ENCODE measurements at regions of chr12 and their contacts with region 1.

Region 1: DNA sequence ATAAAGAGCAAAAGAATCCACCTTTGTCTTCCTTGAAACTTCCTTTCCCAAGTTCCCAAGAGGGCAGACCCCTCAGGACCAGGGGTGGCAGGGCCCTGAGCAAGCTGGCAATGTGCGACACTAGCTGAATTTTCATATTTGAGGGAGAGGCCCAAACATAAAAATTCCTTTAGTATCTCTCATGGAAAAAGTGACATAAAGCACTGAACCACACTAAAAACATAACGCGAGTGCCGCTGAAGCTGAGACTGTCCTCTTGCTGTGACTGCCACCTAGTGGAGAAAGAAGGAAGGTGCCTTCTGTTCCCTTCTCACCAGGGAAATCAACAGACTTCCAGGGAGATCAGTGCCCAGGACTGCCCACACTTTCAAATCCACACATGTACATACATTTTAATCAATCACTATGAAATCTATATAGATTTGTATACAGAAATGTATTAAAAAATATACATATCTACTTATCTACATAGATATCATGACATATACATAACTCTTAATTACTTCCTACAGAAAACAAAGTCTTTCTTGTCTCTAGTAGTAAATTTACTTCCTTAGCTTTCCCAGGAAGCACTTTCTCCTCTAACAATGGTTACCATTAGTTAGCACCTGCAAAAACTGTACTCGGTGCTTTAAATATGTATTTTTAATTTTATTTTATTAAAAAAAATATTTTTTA is 53.8 kb downstream of the SSH1 start:
- DNase-seq: peak; percentile 88
- H3K4me3 Mint-ChIP-seq: no peak overlapping the region
- H3K27ac Mint-ChIP-seq: no peak overlapping the region
- H3K4me1 Mint-ChIP-seq: no peaks in the 10 kb centered on the region
- H3K27me3 Mint-ChIP-seq: no peaks in the 10 kb centered on the region
- CTCF ChIP-seq: peak; percentile 96

Region 2: DNA sequence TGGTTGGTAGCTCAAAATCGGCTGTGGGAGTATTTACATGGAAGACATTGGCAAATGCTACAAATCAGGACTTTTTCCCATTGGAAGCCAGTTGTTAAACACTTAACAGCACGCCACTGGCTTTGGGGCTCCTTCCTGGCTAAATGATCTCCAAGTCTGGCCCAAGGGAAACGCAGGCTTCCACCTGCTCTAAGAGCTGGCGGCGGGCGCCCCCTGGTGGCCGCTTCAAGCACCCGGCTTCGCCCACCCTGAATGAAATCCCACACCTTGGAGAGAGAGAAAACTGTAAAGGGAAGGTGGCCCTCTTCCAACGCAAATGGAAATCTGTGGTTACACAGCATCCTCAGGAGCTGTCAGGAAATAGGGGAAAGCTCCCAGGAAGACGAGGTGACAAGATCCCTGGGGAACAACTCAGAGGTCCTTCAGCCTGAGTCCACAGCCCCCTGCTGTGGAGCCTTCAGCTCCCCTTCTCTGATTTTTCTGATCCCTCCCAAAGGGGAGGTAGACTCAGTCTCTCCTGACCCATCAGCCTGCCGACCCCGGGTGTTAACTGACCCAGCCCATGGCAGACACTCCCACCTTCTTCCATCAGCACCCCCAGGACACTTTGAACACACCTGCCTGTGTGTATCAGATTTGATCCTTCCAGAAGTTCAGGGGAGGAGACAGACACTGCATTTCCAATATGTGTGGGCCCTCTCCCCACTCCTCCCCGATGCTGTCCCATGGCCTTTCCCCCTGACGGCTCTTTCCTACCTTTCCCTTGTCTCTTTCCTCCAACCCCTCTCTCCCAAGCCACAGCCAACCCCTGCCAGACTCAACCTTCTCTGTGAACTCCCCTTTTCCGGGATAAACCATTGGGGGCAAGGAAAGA is 185.3 kb before region 1 on chr12:
- CTCF ChIA-PET with region 1: interaction called, 31 read pairs
- POLR2A ChIA-PET with region 1: no interaction called
- intact Hi-C with region 1: no loop called
- DNase-seq: peak; percentile 85
- H3K4me3 Mint-ChIP-seq: no peak overlapping the region
- H3K27ac Mint-ChIP-seq: no peak overlapping the region
- H3K4me1 Mint-ChIP-seq: no peaks in the 10 kb centered on the region
- H3K27me3 Mint-ChIP-seq: no peaks in the 10 kb centered on the region
- CTCF ChIP-seq: peak; percentile 94

Region 3: DNA sequence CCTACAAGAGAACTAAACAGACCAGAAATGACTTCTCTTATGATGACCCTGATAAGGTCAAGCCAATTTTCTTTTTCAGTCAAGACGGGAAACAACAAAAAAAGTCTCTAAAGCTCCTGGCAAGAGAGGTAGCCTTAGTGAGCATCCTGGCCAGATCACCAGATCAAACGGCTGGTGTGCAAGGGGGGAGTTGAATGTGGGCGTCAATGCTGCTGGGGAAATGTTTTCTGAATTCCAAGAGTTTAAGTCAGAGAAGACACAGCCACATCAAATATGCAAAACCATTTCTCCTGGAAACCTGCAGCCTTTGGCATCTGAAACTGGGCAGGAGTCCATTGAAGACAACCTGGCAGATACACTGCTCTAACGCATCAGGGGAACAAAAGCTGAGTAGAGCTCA is 153.9 kb before region 1 on chr12:
- CTCF ChIA-PET with region 1: interaction called, 12 read pairs
- POLR2A ChIA-PET with region 1: no interaction called
- intact Hi-C with region 1: no loop called
- DNase-seq: peak; percentile 41
- H3K4me3 Mint-ChIP-seq: no peak overlapping the region
- H3K27ac Mint-ChIP-seq: no peak overlapping the region
- H3K4me1 Mint-ChIP-seq: no peaks in the 10 kb centered on the region
- H3K27me3 Mint-ChIP-seq: no peaks in the 10 kb centered on the region
- CTCF ChIP-seq: no peak

Region 4: DNA sequence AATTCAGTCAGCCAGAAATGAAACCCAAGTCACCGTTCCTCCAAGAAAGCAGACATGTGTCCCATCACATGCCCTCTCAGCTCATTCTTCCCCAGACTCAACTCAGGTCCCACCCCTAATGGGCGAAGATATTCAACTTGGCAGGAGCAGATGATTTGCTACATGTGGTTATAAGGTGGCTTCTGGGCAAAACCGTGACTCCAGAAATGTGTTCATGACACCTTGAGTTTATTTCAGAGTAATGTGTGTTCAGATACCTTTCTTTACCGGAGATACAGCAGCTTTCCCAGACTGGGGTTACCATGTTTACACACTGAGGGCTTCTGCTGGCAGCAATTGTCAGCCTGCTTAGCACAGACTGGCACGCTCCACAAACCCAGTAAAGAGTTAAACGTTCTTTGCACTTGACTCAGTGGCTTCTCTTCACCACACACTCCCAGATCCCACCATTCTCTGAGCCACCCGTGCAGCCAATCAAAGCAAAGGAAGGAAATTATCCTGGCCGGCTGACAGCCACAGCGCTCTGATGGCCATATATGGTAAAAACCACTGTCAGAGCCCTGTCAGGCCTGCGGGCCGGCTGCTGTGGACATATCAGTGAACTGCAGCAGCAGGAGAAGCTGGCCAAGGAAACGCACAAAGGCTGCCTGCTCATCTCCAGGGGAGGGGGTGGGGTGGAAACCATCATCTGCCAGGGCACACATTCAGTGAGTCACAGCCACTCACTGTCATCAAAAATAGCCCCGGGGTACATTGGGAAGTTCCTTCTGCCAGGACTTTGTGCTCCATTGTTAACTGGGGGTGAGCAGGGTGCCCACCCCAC is 112.2 kb before region 1 on chr12:
- CTCF ChIA-PET with region 1: interaction called, 19 read pairs
- POLR2A ChIA-PET with region 1: interaction called, 6 read pairs
- intact Hi-C with region 1: no loop called
- DNase-seq: peak; percentile 100
- H3K4me3 Mint-ChIP-seq: peak overlapping the region; percentile 71
- H3K27ac Mint-ChIP-seq: peak overlapping the region; percentile 98
- H3K4me1 Mint-ChIP-seq: peaks cover 46% of the 10 kb centered on the region
- H3K27me3 Mint-ChIP-seq: no peaks in the 10 kb centered on the region
- CTCF ChIP-seq: peak; percentile 22

Region 5: GRCh38 chr12:108784270-108784669 is 19.3 kb before region 1 on chr12:
- CTCF ChIA-PET with region 1: interaction called, 16 read pairs
- POLR2A ChIA-PET with region 1: interaction called, 4 read pairs
- intact Hi-C with region 1: no loop called
- DNase-seq: no peak
- H3K4me3 Mint-ChIP-seq: no peak overlapping the region
- H3K27ac Mint-ChIP-seq: no peak overlapping the region
- H3K4me1 Mint-ChIP-seq: no peaks in the 10 kb centered on the region
- H3K27me3 Mint-ChIP-seq: no peaks in the 10 kb centered on the region
- CTCF ChIP-seq: no peak

Region 6: DNA sequence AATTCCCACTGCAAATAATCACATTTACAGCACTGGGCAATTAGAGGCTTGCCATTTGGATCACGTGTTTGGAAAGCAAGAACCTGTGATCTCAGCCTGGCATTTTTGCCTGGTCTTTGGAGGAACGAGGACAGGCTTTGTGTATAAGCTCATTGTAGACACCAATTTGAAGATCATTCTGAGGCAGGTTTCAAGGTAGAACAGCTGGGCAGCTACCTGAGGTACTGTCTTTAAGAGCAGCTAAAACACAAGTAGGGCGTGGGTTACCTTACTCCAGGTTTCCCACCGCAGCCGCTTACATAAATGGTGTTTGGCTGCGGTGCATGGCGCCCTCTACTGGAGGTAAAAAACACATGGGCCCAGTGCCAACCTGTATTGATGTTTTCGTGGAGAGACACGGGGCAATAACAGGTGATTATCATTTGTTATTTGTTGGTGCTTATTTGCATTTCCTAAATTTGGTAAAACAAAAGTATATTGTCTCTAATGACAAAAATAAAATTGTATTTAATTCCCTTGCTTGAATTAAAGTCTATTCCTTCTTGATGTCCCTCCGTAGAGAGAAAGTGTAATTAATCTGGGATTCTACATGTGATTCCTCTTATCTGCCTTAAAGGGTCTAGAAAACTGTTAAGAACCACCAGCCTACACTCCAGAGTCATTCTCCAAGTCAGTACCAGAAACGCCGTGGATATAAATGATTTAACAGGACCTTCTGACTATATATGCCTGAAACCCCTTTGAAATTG is 147.6 kb after region 1 on chr12:
- CTCF ChIA-PET with region 1: interaction called, 22 read pairs
- POLR2A ChIA-PET with region 1: interaction called, 6 read pairs
- intact Hi-C with region 1: loop called (anchors 1 kb)
- DNase-seq: peak; percentile 79
- H3K4me3 Mint-ChIP-seq: no peak overlapping the region
- H3K27ac Mint-ChIP-seq: no peak overlapping the region
- H3K4me1 Mint-ChIP-seq: peaks cover 14% of the 10 kb centered on the region
- H3K27me3 Mint-ChIP-seq: peaks cover 2% of the 10 kb centered on the region
- CTCF ChIP-seq: peak; percentile 81

Region 7: GRCh38 chr12:109115758-109116610 is 312.4 kb after region 1 on chr12 and contains the start of gene ACACB:
- CTCF ChIA-PET with region 1: no interaction called
- POLR2A ChIA-PET with region 1: no interaction called
- intact Hi-C with region 1: no loop called
- DNase-seq: no peak
- H3K4me3 Mint-ChIP-seq: no peak within 1 kb of the TSS
- H3K27ac Mint-ChIP-seq: no peak within 1 kb of the TSS
- H3K4me1 Mint-ChIP-seq: no peaks in the 10 kb centered on the region
- H3K27me3 Mint-ChIP-seq: no peaks in the 10 kb centered on the region
- CTCF ChIP-seq: no peak
- total RNA-seq, gene ACACB: 1.0 and 1.3 TPM in 2 replicates

Region 8: DNA sequence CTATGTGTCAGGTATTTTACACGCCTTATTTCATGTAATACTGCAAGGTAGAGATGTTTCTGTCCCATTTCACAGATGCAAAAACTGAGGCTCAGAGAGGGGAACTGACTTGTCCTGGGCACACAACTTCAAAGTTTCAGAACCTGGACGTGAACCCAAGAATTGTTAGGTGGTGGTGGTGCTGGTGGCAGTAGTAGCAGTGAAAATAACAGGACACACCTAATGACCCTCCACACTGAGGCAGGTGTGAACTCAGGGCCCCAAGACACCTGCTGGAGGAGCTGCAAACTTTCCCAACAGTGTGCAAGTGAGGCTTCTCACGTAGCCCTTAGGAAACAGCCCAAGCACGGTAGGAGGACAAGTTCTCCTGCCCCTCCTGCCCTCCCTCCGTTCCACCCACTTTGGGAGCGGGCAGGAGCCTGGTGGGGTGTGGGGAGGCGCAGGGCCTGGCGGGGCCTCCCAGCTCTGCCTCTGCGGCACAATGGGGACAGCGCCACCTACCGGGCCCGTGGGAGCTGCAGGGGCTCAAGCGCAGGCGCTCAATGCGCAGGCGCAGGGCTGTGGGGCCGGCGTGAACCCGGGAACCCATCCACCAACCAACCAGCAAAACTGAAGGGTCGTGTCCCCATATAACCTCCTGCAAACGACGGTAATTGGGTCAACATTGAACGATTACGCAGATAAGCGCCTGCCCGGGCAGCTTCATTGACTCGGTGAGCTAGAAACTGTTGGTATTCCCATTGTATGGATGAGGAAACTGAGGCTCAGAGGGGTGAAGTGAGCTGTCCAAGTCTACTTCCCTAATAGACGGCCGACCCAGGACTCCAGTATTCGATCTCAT is 1041.6 kb after region 1 on chr12:
- CTCF ChIA-PET with region 1: no interaction called
- POLR2A ChIA-PET with region 1: no interaction called
- intact Hi-C with region 1: no loop called
- DNase-seq: peak; percentile 82
- H3K4me3 Mint-ChIP-seq: no peak overlapping the region
- H3K27ac Mint-ChIP-seq: no peak overlapping the region
- H3K4me1 Mint-ChIP-seq: no peaks in the 10 kb centered on the region
- H3K27me3 Mint-ChIP-seq: no peaks in the 10 kb centered on the region
- CTCF ChIP-seq: peak; percentile 97

Measured in MCF 10A (cell line).